K562 (cell line): ENCODE measurements at regions of chr11 and their contacts with region 1.

Region 1: GRCh38 chr11:72534565-72535547 is 100.5 kb upstream of the CLPB start:
- DNase-seq: peak in 1 of 4 experiments; percentile 15
- ATAC-seq: peak; percentile 70
- H3K4me3 ChIP-seq: no peak overlapping the region
- H3K27ac ChIP-seq: no peak overlapping the region
- H3K4me1 ChIP-seq: no peaks in the 10 kb centered on the region
- H3K27me3 ChIP-seq: peaks cover 10 to 17% of the 10 kb centered on the region in 2 experiments; a peak in 4 of 5 replicates
- CTCF ChIP-seq: peak in 2 of 3 experiments; percentile 12 to 33; a peak in 1 of 6 replicates
- EP300 ChIP-seq: no peak
- POLR2A ChIP-seq: no peak
- RAD21 ChIP-seq: no peak

Region 2: GRCh38 chr11:72493426-72494108 is 41.3 kb before region 1 on chr11:
- CTCF ChIA-PET with region 1: no interaction called
- POLR2A ChIA-PET with region 1: interaction called, 3 read pairs
- in situ Hi-C with region 1: no loop called
- intact Hi-C with region 1: loop called (anchors 5 kb)
- DNase-seq: peak; percentile 30 to 83 (median 55)
- ATAC-seq: peak; percentile 99
- H3K4me3 ChIP-seq: no peak overlapping the region
- H3K27ac ChIP-seq: no peak overlapping the region
- H3K4me1 ChIP-seq: peaks cover 17% of the 10 kb centered on the region in 2 experiments; a peak in 4 of 5 replicates
- H3K27me3 ChIP-seq: no peaks in the 10 kb centered on the region
- CTCF ChIP-seq: no peak
- EP300 ChIP-seq: peak; percentile 90
- POLR2A ChIP-seq: no peak
- RAD21 ChIP-seq: no peak